Tibial artery (tissue), 4 donors: ENCODE measurements at regions of chr3 and their contacts with region 1.

Region 1: GRCh38 chr3:107846279-107846852 is 244.5 kb downstream of the CD47 start:
- DNase-seq: peak; percentile 53 to 81
- H3K4me3 ChIP-seq: no peak overlapping the region
- H3K27ac ChIP-seq: no peak overlapping the region
- H3K4me1 ChIP-seq: peaks cover 0 to 11% (median 1%) of the 10 kb centered on the region in 4 donors
- H3K27me3 ChIP-seq: no peaks in the 10 kb centered on the region
- CTCF ChIP-seq: peak; percentile 55 to 58

Region 2: DNA sequence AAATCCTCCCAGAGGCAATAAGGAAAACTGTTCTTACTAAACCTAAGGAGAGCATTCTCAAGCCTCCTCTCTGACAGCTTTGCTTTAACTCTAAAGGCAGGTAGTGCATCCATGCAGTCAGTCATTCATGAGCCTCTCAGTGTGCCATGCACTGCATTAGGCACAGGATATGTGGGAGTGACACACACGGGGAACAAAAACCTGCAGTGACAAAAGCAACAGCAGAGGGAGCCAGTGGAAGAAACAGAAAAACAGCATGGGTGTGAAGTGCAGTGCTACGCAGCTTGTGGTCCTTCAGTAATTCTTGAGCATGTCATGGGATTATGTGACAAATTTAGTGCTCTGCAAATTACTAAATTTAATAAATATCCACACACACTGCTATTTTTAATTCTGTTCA is 92.9 kb before region 1 on chr3:
- intact Hi-C with region 1: loop called (anchors 10 kb)
- DNase-seq: peak in 1 of 2 donors; percentile 33
- H3K4me3 ChIP-seq: no peak overlapping the region
- H3K27ac ChIP-seq: no peak overlapping the region
- H3K4me1 ChIP-seq: peaks cover 0 to 6% (median under 1%) of the 10 kb centered on the region in 4 donors
- H3K27me3 ChIP-seq: no peaks in the 10 kb centered on the region
- CTCF ChIP-seq: peak; percentile 48 to 51

Region 3: DNA sequence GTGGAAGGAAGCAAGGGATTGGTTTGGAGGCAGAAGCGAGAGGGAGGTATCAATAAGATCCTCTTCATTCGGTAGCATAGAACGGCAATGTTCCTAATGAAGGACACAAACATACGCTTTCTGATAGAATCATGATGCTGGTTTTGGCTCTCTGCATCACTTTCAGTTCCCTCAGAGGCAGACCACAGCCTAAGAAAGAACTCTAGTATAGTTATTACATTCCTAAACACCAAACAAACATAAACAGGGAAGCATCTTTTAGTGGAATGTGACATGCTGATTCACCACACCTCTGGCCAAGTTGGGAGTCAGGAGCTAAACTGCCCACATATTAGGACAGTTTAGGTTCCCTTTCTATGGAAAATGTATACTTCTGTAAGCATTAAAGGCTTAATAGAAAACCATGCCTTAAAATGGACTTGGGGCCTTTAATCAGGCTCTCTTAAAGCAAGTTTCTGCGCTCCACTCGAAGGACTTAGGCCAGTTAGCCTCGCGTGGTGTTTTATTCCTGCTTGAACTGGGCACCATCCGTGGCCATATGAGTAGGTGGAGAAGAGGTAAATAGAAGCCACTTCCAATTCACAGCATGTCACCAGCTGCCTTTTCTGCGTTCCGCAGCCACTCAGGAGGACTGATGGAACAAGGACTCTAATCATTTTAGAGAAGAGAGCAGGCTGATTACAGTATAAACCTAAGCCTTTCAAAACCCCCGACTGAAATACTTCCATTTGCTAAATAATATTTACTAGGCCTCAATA is 190.8 kb after region 1 on chr3:
- intact Hi-C with region 1: no loop called
- DNase-seq: no peak
- H3K4me3 ChIP-seq: no peak overlapping the region
- H3K27ac ChIP-seq: no peak overlapping the region
- H3K4me1 ChIP-seq: no peaks in the 10 kb centered on the region
- H3K27me3 ChIP-seq: no peaks in the 10 kb centered on the region
- CTCF ChIP-seq: no peak